ENCODE measurements at regions of chr1 and their contacts with region 1.

Region 1: GRCh38 chr1:111481387-111482221 is 7.8 kb downstream of the C1orf162 start:
- DNase-seq: peak; percentile 73
- ATAC-seq: peak; percentile 74
- H3K4me3 Mint-ChIP-seq: no peak overlapping the region
- H3K27ac Mint-ChIP-seq: no peak overlapping the region
- H3K4me1 Mint-ChIP-seq: peaks cover 21% of the 10 kb centered on the region
- H3K27me3 Mint-ChIP-seq: peaks cover 35% of the 10 kb centered on the region

Region 2: DNA sequence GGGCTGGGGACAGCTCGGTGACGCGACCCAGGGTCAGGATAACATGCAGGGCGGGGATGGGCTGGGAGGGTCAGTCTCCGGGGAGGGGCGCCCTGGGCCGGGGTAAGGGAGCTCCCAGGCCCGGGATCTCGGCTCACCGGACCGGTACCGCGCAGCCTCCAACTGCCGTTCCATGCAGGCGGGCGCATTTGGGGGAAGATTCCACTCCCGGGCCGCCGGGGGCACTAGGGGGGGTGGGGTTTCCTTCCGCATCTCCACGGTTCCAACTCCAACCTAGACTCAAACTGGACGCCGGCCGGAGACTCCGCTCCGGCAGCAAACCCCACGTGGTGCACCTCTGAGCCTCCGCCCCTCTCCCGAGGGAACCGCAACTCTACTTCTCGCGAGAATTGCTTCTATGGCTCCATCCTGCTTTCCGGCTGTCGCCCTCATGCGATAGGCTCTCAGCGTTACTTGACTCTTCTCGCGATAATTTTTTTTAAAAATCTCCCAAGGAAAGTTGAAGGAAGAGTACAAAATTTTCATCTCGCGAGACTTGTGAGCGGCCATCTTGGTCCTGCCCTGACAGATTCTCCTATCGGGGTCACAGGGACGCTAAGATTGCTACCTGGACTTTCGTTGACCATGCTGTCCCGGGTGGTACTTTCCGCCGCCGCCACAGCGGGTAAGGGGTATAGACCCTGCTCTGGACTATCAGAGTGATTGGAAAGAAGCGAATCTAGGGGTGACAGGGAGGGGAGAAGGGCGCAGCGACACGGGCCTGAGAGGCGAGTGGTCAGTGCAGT is 32.5 kb before region 1 on chr1 and contains the starts of genes ATP5PB and WDR77:
- CTCF ChIA-PET with region 1: interaction called, 16 read pairs
- DNase-seq: peak; percentile 97
- ATAC-seq: peak; percentile 96
- H3K4me3 Mint-ChIP-seq: peak within 1 kb of the TSS; percentile 98
- H3K27ac Mint-ChIP-seq: peak within 1 kb of the TSS; percentile 94
- H3K4me1 Mint-ChIP-seq: peaks cover 73% of the 10 kb centered on the region
- H3K27me3 Mint-ChIP-seq: no peaks in the 10 kb centered on the region
- total RNA-seq, gene ATP5PB: 215 to 266 TPM
- total RNA-seq, gene WDR77: 29.6 to 37.5 TPM

Region 3: DNA sequence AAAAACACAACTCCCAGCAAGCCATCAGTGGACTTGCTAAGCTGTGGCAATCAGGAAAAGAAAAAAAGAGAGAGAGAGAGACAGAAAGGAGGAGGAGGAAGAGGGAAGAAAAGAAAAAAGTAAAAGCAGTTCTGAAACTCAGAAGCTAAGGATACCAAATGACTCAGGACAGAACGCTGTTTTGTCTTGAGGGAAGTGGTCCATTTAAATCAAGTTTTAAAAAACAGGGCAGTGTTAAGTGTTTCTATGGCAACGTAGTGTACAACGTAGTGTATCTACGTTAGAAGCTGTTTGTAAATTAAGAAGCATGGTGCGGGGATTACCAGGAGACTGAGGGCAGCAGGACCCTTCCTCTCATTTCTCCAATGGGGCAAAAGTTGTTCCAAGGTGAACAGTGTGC is 16.0 kb after region 1 on chr1:
- CTCF ChIA-PET with region 1: interaction called, 16 read pairs
- DNase-seq: no peak
- ATAC-seq: no peak
- H3K4me3 Mint-ChIP-seq: no peak overlapping the region
- H3K27ac Mint-ChIP-seq: no peak overlapping the region
- H3K4me1 Mint-ChIP-seq: peaks cover 30% of the 10 kb centered on the region
- H3K27me3 Mint-ChIP-seq: no peaks in the 10 kb centered on the region

Region 4: DNA sequence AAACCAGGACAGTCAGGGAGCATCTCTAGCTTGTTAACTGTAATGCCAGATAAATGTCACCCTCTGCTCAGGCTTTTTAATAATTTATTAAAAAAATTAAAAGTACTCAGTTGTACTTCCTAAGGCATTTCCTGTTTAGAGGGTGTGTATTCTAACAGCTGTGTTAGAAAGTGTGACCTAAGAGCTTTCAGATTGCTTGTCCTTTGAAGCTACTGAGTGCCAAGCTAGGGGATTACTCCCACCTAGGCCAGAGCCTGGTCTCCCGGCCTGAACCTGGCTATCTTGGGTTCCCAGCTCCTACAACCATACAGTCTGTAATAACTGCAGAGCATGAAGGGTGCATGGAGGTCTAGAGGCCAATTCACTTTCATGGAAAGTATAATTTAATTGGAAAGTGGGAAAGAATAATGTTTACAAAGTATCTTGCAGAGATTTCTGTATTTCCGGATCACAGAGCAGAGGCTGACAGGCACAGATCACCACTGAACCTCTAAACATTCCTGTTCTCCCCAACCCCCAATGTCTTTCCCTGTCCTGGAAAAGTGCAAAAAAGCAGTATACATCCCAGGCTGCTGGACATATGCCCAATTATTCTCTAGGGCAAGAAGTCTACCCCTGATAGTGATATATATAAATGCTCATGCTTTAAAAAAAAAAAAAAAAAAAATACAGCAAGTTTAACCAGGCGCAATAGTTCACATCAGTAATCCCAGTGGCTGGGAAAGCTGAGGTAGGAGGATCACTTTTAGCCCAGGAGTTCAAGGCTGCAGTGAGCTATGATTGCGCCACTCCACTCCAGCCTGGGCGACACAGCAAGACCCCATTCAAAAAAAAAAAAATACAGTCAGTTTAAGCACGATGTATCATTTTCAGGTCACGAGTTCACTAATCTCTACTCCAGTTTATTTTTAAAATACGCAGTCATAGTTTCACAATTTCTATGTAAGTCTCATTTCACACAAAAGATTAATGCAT is 101.3 kb after region 1 on chr1:
- CTCF ChIA-PET with region 1: no interaction called
- DNase-seq: no peak
- ATAC-seq: no peak
- H3K4me3 Mint-ChIP-seq: no peak overlapping the region
- H3K27ac Mint-ChIP-seq: no peak overlapping the region
- H3K4me1 Mint-ChIP-seq: peaks cover 4% of the 10 kb centered on the region
- H3K27me3 Mint-ChIP-seq: no peaks in the 10 kb centered on the region

Region 5: DNA sequence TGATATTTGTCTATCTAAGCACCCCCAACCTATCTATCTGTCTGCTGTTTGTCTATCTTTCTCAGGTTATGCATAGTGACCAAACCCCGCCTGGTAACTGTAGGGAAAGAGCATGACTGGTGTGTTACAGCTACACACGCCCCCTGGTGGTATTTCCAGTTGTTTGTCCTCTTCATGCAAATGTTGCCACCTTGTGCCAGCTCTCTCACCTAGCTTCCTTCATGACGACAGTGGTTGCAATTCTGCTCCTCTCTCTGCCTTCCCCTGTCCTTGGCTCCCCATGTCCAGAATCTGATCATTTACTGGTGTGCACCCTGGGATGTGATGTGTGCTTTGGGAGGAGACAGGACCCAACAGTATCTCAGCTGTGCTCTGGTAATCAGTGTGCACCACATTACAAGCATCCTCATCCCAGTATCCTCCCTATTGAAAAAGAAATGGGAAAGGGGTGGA is 265.7 kb after region 1 on chr1:
- CTCF ChIA-PET with region 1: interaction called, 18 read pairs
- DNase-seq: peak; percentile 84
- ATAC-seq: peak; percentile 91
- H3K4me3 Mint-ChIP-seq: no peak overlapping the region
- H3K27ac Mint-ChIP-seq: no peak overlapping the region
- H3K4me1 Mint-ChIP-seq: peaks cover 10% of the 10 kb centered on the region
- H3K27me3 Mint-ChIP-seq: peaks cover 8% of the 10 kb centered on the region